Right ventricle myocardium inferior (tissue), 1 donor: ENCODE measurements at regions of chr6 and their contacts with region 1.

Region 1: GRCh38 chr6:162177746-162178145 is 549.8 kb downstream of the PRKN start:
- DNase-seq: no peak
- ATAC-seq: peak; percentile 79

Region 2: GRCh38 chr6:162056745-162057144 is 121.0 kb before region 1 on chr6:
- intact Hi-C with region 1: loop called (anchors 2 kb)
- DNase-seq: no peak
- ATAC-seq: peak; percentile 89

Region 3: GRCh38 chr6:162245830-162246420 is 68.2 kb after region 1 on chr6:
- intact Hi-C with region 1: no loop called
- DNase-seq: no peak
- ATAC-seq: no peak

Region 4: DNA sequence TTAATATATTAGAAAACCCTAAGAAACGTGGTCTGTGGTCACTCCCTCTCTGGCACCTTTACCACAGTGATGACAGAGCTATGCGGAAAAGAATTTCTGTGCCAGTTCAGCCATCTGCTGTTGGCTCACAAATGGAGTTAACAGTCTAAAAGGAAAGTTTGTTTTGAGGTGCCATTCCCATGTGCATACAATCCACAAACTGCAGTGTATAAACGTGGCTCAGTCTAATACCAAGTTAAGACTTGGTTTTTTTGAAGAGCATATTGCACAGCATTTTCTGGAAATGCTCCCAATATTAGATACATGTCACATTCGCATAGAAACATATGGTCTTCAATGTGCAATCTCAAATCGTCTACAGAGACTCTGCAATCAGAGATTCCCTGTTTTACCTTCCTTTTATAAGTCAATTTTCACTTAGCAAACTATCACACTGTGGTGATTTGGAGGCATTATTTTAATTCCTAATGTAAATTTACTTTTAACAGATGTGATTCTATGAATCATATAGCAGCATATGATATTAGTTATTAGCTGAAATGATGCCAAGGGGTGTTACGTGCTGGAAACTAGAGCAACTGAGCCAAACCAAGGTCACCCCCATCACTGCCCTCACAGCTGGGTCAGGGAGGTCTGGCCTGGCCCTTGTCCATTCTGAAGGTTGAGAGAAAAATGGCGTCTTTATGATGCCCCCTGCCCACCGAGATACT is 166.3 kb after region 1 on chr6:
- intact Hi-C with region 1: no loop called
- DNase-seq: no peak
- ATAC-seq: peak; percentile 46

Region 5: GRCh38 chr6:162468326-162468725 is 290.6 kb after region 1 on chr6:
- intact Hi-C with region 1: loop called (anchors 5 kb)
- DNase-seq: no peak
- ATAC-seq: peak; percentile 83

Region 6: GRCh38 chr6:162736961-162737360 is 559.2 kb after region 1 on chr6:
- intact Hi-C with region 1: loop called (anchors 5 kb)
- DNase-seq: no peak
- ATAC-seq: no peak